ENCODE measurements at regions of chr1 and their contacts with region 1.

Region 1: GRCh38 chr1:108892356-108893140 is 15.8 kb downstream of the GPSM2 start:
- DNase-seq: no peak
- ATAC-seq: no peak
- H3K4me3 ChIP-seq: no peak overlapping the region
- H3K27ac ChIP-seq: no peak overlapping the region
- H3K4me1 ChIP-seq: peaks cover 0 to 8% (median 0%) of the 10 kb centered on the region in 12 donors
- H3K27me3 ChIP-seq: no peaks in the 10 kb centered on the region
- CTCF ChIP-seq: no peak
- POLR2A ChIP-seq: no peak

Region 2: DNA sequence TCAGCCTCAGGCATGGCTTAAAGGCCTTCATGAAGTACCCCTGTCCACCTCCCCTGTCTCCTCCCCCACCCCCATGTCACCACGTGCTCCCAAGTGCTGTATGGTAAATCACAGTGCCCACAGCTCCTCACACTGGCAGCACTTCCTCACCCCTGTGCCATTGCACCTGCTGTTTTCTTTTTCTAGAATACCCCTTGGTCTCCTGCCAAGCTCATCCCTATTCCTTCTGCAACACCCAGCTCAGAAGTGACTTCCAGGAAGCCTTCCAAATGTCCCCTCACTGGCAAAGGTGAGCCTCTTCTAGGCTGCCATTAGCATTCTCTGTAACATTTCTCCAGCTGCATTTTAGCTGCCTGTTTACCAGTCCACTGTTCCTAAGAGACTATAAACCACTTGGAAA is 45.1 kb before region 1 on chr1:
- intact Hi-C with region 1: loop called in 1 of 10 experiments (anchors 5 kb)
- DNase-seq: no peak
- ATAC-seq: no peak
- H3K4me3 ChIP-seq: no peak overlapping the region
- H3K27ac ChIP-seq: no peak overlapping the region
- H3K4me1 ChIP-seq: peaks cover 0 to 9% (median 0%) of the 10 kb centered on the region in 12 donors
- H3K27me3 ChIP-seq: no peaks in the 10 kb centered on the region
- CTCF ChIP-seq: no peak
- POLR2A ChIP-seq: no peak

Measured in heart left ventricle (tissue), 16 donors.